Ovary (tissue), 10 donors: ENCODE measurements at regions of chr1 and their contacts with region 1.

Region 1: DNA sequence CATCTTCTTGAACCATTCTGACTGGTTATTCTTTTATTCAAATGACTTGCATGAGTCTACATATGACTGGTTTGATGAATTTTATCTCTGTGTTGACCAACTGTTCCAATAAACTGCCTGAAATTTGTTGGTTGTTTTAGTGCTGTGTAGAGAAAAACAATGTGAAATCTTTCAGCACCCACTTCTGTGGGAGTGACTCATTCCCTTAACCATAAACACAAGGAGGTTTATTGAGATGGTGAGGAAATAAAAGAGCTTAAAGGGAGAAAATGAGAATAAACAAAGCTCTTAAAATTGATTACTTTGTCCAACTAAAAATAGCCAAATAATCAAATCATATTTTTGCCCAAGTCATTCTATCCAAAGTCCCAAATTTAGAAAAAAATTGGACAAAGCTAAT is 341.1 kb downstream of the TGFB2 start:
- DNase-seq: no peak
- H3K4me3 ChIP-seq: no peak overlapping the region
- H3K27ac ChIP-seq: no peak overlapping the region
- H3K4me1 ChIP-seq: no peaks in the 10 kb centered on the region
- H3K27me3 ChIP-seq: no peaks in the 10 kb centered on the region
- CTCF ChIP-seq: no peak
- EP300 ChIP-seq: no peak
- POLR2A ChIP-seq: no peak

Region 2: GRCh38 chr1:218488986-218489385 is 197.3 kb before region 1 on chr1:
- intact Hi-C with region 1: no loop called
- DNase-seq: no peak
- H3K4me3 ChIP-seq: no peak overlapping the region
- H3K27ac ChIP-seq: no peak overlapping the region
- H3K4me1 ChIP-seq: no peaks in the 10 kb centered on the region
- H3K27me3 ChIP-seq: no peaks in the 10 kb centered on the region
- CTCF ChIP-seq: no peak
- EP300 ChIP-seq: no peak
- POLR2A ChIP-seq: no peak

Region 3: DNA sequence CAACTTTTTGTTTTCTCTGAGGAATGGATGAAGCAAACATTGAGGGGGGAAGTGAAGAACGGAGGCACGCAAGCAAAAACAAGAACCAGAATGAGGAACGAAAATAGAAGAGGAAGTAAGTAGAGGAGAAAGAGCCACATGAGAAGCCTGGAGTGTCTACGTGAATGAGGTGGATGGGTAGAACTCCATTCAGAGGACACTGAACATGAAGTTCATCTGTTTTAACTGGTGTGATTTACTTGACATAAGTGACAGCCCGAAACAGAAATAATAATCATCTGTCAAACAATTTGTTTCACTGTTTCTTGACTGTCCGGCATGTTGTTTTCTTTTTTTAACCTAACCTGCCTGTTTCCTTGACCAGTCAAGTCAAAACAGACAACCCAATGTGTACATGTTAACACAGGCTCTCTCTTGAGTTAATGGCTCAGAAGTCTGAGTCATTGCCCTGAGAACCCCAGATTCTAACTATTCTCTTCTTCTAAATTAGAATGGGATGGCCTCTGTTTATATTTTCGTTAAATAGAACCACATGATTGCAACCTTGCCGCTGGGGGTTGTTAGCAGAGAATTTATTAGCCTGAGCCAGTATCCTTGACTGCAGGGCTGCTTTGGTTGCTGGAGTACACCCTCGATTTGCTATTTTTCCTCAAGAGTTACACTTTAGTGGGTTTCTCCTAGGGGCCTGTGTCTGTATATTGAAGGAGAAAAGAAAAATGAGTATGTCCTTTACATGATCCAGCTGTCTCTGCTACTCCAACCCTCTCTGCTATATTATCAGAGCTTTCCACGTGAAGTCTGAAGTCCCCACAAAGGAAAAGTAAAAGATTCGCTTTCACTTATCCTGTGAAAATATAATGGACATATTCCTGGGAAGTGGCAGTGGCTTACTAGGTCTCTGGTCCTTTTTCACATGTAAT is 774.9 kb after region 1 on chr1:
- intact Hi-C with region 1: loop called in 1 of 4 experiments (anchors 5 kb)
- DNase-seq: no peak
- H3K4me3 ChIP-seq: no peak overlapping the region
- H3K27ac ChIP-seq: no peak overlapping the region
- H3K4me1 ChIP-seq: no peaks in the 10 kb centered on the region
- H3K27me3 ChIP-seq: no peaks in the 10 kb centered on the region
- CTCF ChIP-seq: peak in 1 of 3 donors; percentile 12
- EP300 ChIP-seq: no peak
- POLR2A ChIP-seq: no peak